WTC11 (cell line): ENCODE measurements at regions of chr14 and their contacts with region 1.

Region 1: GRCh38 chr14:57051633-57052032 is 217.1 kb downstream of the EXOC5 start:
- DNase-seq: peak; percentile 36
- ATAC-seq: peak; percentile 85
- H3K4me3 Mint-ChIP-seq: no peak overlapping the region
- H3K27ac Mint-ChIP-seq: no peak overlapping the region
- H3K4me1 Mint-ChIP-seq: peaks cover 24% of the 10 kb centered on the region
- H3K27me3 Mint-ChIP-seq: peaks cover 39% of the 10 kb centered on the region
- CTCF ChIP-seq: no peak

Region 2: GRCh38 chr14:56810836-56811592 is 240.6 kb before region 1 on chr14:
- CTCF ChIA-PET with region 1: interaction called, 12 read pairs
- POLR2A ChIA-PET with region 1: no interaction called
- DNase-seq: peak; percentile 46
- ATAC-seq: peak; percentile 14
- H3K4me3 Mint-ChIP-seq: peak overlapping the region; percentile 94
- H3K27ac Mint-ChIP-seq: no peak overlapping the region
- H3K4me1 Mint-ChIP-seq: peaks cover 74% of the 10 kb centered on the region
- H3K27me3 Mint-ChIP-seq: peaks cover 87% of the 10 kb centered on the region
- CTCF ChIP-seq: no peak

Region 3: DNA sequence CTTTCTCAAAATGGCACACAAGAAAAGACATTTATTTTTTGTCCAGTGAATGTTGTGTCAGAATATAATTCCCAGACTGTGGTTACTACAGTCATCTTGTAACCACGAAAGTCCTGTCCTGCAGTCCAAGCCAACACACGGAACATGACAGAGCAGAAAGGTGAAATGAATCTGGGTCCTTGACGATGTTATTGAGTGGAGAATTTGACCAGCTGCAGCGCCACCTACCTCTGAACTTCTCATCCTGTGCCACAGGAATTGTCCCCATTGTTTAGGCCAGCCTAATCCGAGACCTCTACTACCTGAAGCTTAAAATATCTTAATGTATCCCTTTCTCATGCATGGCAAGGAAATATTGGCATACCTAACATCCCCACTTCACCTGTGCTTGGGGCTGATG is 177.3 kb before region 1 on chr14:
- CTCF ChIA-PET with region 1: interaction called, 11 read pairs
- POLR2A ChIA-PET with region 1: no interaction called
- DNase-seq: peak; percentile 68
- ATAC-seq: peak; percentile 97
- H3K4me3 Mint-ChIP-seq: no peak overlapping the region
- H3K27ac Mint-ChIP-seq: no peak overlapping the region
- H3K4me1 Mint-ChIP-seq: peaks cover 18% of the 10 kb centered on the region
- H3K27me3 Mint-ChIP-seq: peaks cover 95% of the 10 kb centered on the region
- CTCF ChIP-seq: peak; percentile 55

Region 4: GRCh38 chr14:56884617-56885016 is 167.0 kb before region 1 on chr14:
- CTCF ChIA-PET with region 1: interaction called, 15 read pairs
- POLR2A ChIA-PET with region 1: no interaction called
- DNase-seq: no peak
- ATAC-seq: peak; percentile 29
- H3K4me3 Mint-ChIP-seq: no peak overlapping the region
- H3K27ac Mint-ChIP-seq: no peak overlapping the region
- H3K4me1 Mint-ChIP-seq: peaks cover 50% of the 10 kb centered on the region
- H3K27me3 Mint-ChIP-seq: peaks cover 92% of the 10 kb centered on the region
- CTCF ChIP-seq: no peak

Region 5: DNA sequence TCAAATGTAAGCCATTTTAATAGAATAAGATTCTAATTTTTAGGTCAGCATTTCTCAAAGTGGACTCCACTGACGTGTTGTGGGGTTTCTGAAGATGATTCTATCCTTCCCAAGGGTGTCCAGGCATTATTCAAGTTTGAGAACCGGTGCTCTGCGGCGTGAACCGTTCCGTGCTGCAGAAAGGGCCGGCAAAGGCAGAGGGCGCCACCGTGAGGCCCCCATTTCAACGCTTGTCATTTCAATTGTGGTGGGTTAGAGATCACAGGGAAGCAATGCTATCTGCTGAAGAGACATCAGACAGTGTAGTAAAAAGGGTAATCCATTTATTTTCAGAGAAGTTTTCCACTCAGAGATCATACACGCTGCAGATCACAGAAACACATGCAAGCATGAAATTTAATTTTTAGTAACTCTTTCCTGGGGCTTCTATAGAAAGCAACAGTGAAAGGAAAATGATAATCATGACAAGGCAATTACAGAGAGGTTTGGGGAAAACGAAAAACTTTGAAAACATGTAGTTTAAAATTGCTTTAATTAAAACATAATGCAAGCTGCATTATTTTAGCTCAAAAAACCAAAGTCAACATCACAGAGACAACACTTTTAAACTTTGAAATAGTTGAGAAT is 15.4 kb after region 1 on chr14:
- CTCF ChIA-PET with region 1: interaction called, 10 read pairs
- POLR2A ChIA-PET with region 1: no interaction called
- DNase-seq: peak; percentile 80
- ATAC-seq: peak; percentile 92
- H3K4me3 Mint-ChIP-seq: no peak overlapping the region
- H3K27ac Mint-ChIP-seq: no peak overlapping the region
- H3K4me1 Mint-ChIP-seq: peaks cover 35% of the 10 kb centered on the region
- H3K27me3 Mint-ChIP-seq: peaks cover 4% of the 10 kb centered on the region; the same call in 1 of the 2 replicates
- CTCF ChIP-seq: peak; percentile 44; the same call in 1 of the 2 replicates